SK-N-SH (cell line): ENCODE measurements at regions of chr1 and their contacts with region 1.

Region 1: GRCh38 chr1:71196685-71197084 is 115.8 kb upstream of the ZRANB2 start:
- DNase-seq: peak; percentile 22
- H3K4me3 ChIP-seq: no peak overlapping the region
- H3K27ac ChIP-seq: no peak overlapping the region
- H3K4me1 ChIP-seq: no peaks in the 10 kb centered on the region
- H3K27me3 ChIP-seq: no peaks in the 10 kb centered on the region
- CTCF ChIP-seq: peak; percentile 59
- EP300 ChIP-seq: no peak
- RAD21 ChIP-seq: peak; percentile 75

Region 2: GRCh38 chr1:71179997-71180396 is 16.7 kb before region 1 on chr1:
- CTCF ChIA-PET with region 1: interaction called, 13 read pairs
- POLR2A ChIA-PET with region 1: no interaction called
- DNase-seq: no peak
- H3K4me3 ChIP-seq: no peak overlapping the region
- H3K27ac ChIP-seq: no peak overlapping the region
- H3K4me1 ChIP-seq: no peaks in the 10 kb centered on the region
- H3K27me3 ChIP-seq: no peaks in the 10 kb centered on the region
- CTCF ChIP-seq: no peak
- EP300 ChIP-seq: no peak
- RAD21 ChIP-seq: no peak

Region 3: GRCh38 chr1:71240656-71241055 is 44.0 kb after region 1 on chr1:
- CTCF ChIA-PET with region 1: no interaction called
- POLR2A ChIA-PET with region 1: no interaction called
- DNase-seq: no peak
- H3K4me3 ChIP-seq: no peak overlapping the region
- H3K27ac ChIP-seq: no peak overlapping the region
- H3K4me1 ChIP-seq: no peaks in the 10 kb centered on the region
- H3K27me3 ChIP-seq: no peaks in the 10 kb centered on the region
- CTCF ChIP-seq: no peak
- EP300 ChIP-seq: no peak
- RAD21 ChIP-seq: no peak

Region 4: DNA sequence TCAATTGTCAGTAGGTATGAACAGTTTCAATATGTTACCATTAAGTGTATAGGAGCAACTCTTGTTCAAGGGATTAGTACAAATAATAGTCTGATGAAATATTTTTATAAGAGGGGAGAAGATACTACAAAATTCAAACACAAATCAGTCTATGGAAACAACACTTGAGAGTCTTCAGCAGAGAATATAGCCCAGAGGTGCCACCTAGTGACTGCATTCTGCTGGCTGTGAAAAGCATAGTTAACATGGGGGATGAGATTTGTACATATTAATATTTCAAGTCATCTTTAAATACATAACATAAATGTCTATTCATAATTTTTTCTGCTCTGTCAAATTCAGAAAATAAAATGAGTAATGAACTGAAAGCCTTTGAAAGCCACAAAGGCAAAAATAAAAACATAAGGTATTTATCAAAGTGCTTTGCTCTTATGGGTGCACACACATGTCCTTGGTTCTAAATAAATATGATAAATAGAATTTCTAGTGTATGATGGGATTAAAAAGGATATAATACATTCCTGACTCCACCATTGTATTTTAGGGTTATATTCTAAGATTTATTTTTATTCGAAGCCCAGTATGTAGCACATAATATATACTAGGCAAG is 325.1 kb after region 1 on chr1:
- CTCF ChIA-PET with region 1: interaction called, 17 read pairs
- POLR2A ChIA-PET with region 1: no interaction called
- DNase-seq: peak; percentile 47
- H3K4me3 ChIP-seq: no peak overlapping the region; a peak in 1 of 4 replicates
- H3K27ac ChIP-seq: no peak overlapping the region
- H3K4me1 ChIP-seq: no peaks in the 10 kb centered on the region; a peak in 2 of 4 replicates
- H3K27me3 ChIP-seq: no peaks in the 10 kb centered on the region
- CTCF ChIP-seq: peak; percentile 67
- EP300 ChIP-seq: no peak
- RAD21 ChIP-seq: peak; percentile 86